Dorsolateral prefrontal cortex (tissue), 120 donors: ENCODE measurements at regions of chr17 and their contacts with region 1.

Region 1: DNA sequence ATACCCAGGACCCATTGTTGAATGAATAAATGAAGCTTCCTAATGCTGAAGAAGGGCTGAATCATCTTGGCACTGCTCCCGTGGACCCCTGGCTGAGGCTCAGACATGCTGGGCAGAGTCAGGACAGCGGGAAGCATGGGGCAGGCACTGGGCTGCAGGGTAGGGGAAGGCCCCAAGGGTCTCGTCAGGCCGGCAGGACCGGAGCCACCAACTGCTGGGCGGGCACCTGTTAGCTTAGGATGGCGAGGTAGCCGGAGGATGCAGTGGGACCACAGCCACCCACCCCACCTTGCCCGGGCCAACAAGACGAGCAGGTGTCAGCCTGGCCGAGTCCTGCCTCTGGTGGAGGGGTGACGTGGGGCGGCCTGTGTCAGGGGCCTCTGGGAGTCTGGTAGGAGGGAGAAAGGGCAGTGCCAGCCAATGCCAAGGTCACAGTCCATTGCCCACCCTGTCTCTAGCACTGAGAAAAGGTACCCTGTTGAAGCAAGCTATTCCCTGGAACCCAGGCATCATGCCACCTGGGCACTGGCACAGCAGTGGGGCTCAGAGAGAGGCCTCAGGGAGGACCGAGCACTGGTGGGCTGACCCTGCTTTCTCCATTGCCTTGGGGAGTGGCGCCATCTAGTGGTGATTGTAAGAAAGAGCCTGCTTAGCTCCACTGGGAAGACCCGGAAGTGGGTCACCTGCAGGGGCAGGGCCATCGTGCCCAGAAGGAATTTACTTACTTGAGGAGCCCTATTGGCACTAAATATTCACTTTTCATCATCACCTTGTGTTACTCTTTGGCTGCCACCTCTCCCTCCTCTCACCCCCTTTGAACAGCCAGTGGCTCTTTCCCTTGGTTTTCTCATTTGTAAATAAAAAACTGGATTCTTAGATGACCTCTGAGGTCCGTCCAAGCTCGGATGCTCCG is 3.0 kb upstream of the DLX3 start:
- DNase-seq: peak in 9 of 10 donors; percentile 56 to 83 (median 63)
- H3K4me3 ChIP-seq: no peak overlapping the region
- H3K27ac ChIP-seq: no peak overlapping the region
- H3K27me3 ChIP-seq: peaks cover 0 to 98% (median 83%) of the 10 kb centered on the region in 45 donors
- CTCF ChIP-seq: peak; percentile 84 to 99 (median 94)

Region 2: DNA sequence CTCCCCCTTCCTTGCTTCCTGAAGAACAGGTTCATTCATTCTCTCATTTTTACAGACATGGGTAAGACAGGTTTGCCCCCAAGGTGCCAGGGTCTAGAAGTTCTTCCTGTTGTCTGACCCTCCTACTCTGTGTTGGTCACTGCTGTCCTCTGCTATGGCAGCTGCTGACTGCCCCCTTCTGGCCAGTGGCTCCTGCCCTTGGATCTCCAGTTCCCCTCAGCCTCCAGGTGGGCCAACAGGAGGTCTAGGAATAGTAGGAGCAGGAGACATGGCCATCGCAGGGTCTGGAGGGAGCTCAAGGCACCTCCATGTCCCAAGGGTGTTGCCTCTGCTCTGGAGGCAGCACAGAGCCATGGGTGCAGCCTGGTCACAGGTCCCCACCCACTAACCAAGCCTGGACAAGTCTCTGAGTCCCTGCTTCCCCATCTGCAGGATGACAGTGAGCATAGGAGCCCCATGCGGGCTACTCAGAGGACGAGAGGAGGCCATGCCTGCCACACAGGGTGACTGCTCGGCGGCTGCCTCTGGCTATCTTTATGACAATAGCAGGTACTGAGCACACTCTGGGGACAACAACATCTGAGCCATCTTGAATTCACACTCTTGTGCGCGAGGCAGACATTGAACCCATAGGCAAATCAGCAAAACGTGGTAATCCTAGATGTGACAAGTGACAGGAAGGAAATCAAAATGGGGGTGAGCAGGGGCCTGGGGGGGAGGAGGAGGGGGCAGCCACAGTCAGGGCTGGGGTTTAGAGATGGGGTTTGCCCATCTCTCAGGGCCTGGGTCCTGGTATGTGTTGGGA is 449.3 kb before region 1 on chr17:
- intact Hi-C with region 1: no loop called
- DNase-seq: no peak
- H3K4me3 ChIP-seq: no peak overlapping the region
- H3K27ac ChIP-seq: no peak overlapping the region
- H3K27me3 ChIP-seq: peaks cover 0 to 15% (median 0%) of the 10 kb centered on the region in 45 donors
- CTCF ChIP-seq: peak in 52 of 56 donors; percentile 15 to 75 (median 47)

Region 3: DNA sequence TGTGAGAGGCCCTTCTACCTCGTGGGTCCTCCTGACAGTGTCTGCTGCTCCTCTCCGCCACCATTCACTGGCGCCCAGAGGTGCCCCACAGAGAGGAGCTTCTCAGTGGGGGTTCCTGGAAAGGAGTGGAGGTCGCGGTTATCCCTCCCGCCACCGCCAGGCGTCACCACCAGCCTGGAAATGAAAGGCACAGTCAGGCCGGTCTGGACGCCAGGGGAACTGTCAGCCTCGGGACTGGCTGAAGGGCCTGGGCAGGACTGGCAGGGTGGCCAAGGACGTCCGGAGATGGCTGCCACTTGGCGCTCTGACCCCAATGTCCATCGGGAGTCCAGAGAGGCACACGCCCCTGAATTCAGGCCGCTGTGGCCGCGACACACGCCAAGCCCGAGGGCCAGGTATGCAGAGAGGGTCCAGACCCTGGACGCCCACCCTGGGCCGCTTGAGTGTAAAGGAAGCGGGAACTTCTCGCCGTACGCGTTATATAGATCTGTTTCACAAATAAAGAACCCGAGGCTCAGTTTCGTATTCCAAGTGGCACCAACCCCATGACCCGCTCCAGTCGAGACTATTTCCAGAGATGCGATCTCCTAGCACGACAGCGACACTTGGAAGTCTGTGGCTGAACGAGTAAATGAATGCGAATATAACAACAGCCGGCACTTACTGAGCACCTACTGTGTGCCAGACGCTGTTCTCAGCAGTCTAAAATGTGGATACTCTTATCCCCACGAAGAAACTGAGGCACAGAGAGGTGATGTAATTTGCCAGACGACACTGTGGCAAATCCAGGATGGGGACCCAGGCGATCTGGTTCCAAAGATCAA is 430.0 kb before region 1 on chr17:
- intact Hi-C with region 1: loop called (anchors 5 to 10 kb)
- DNase-seq: peak; percentile 76 to 91 (median 88)
- H3K4me3 ChIP-seq: peak overlapping the region; percentile 34 to 78 (median 57)
- H3K27ac ChIP-seq: peak overlapping the region in 44 of 59 donors; percentile 5 to 95 (median 68)
- H3K27me3 ChIP-seq: no peaks in the 10 kb centered on the region
- CTCF ChIP-seq: peak; percentile 86 to 99 (median 96)

Region 4: GRCh38 chr17:49575579-49576087 is 422.4 kb before region 1 on chr17 and contains the start of gene NXPH3:
- intact Hi-C with region 1: loop called in 1 of 2 experiments (anchors 5 kb)
- DNase-seq: peak in 3 of 10 donors; percentile 45 to 84 (median 72)
- H3K4me3 ChIP-seq: peak within 1 kb of the TSS; percentile 45 to 84 (median 71)
- H3K27ac ChIP-seq: peak within 1 kb of the TSS in 53 of 59 donors; percentile 14 to 89 (median 70)
- H3K27me3 ChIP-seq: no peaks in the 10 kb centered on the region
- CTCF ChIP-seq: peak in 41 of 56 donors; percentile 7 to 80 (median 42)
- total RNA-seq, gene NXPH3: 8.9 to 36.3 (median 18.6) TPM

Region 5: GRCh38 chr17:49707608-49708514 is 290.2 kb before region 1 on chr17 and contains the start of gene SLC35B1:
- intact Hi-C with region 1: loop called in 1 of 2 experiments (anchors 5 kb)
- DNase-seq: peak; percentile 98 to 100 (median 100)
- H3K4me3 ChIP-seq: peak within 1 kb of the TSS; percentile 76 to 100 (median 97)
- H3K27ac ChIP-seq: peak within 1 kb of the TSS; percentile 87 to 100 (median 98)
- H3K27me3 ChIP-seq: no peaks in the 10 kb centered on the region
- CTCF ChIP-seq: peak; percentile 53 to 91 (median 81)
- total RNA-seq, gene SLC35B1: 30.7 to 59.0 (median 43.7) TPM

Region 6: DNA sequence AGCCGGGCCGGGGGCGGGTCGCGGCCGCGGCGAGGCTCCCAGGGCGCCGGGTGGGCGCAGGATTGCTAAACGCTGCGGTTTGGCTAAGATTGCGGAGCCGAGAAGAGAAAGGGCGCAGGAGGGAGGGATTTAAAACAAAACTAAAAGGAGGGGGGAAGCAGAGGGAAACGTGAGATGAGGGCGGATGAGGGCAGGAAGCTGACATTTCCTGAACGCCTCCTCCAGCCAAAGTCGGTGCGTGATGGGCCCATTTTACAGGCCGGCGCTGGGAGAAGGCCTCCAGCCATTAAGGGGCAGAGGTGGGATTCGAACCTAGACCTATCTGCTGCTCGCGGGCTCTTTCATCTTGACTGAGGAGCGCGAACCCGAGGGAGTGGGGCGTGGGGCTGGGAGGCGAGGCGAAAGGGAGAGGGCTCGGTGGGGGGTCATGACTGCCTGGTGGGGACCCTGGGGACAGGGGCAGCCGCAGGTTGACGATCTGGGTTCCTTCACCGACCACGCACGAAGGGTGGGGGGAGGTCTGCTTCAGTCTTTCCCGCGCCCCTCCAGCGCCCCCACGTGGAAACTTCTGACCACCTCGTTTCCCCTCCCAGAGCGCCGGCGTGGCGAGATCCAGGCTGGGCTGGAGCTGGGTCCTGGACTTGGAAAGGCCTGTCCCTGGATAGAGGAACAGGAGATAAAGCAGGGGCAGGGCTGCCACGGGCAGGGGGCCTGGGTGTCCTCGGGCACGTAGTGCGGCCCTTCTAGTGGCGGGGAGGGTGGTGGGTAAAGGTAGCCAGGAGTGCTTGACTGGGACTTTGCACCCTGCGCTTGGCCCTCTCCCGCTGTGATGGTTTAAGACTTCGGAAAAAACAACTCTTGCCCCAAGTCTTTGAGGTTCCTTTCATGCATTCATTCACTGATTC is 146.4 kb before region 1 on chr17:
- intact Hi-C with region 1: loop called in 1 of 2 experiments (anchors 2 kb)
- DNase-seq: peak in 8 of 10 donors; percentile 25 to 65 (median 58)
- H3K4me3 ChIP-seq: peak overlapping the region; percentile 16 to 73 (median 55)
- H3K27ac ChIP-seq: peak overlapping the region in 2 of 59 donors; percentile 18 to 38
- H3K27me3 ChIP-seq: peaks cover 0 to 10% (median 0%) of the 10 kb centered on the region in 45 donors
- CTCF ChIP-seq: peak in 55 of 56 donors; percentile 25 to 69 (median 56)

Region 7: DNA sequence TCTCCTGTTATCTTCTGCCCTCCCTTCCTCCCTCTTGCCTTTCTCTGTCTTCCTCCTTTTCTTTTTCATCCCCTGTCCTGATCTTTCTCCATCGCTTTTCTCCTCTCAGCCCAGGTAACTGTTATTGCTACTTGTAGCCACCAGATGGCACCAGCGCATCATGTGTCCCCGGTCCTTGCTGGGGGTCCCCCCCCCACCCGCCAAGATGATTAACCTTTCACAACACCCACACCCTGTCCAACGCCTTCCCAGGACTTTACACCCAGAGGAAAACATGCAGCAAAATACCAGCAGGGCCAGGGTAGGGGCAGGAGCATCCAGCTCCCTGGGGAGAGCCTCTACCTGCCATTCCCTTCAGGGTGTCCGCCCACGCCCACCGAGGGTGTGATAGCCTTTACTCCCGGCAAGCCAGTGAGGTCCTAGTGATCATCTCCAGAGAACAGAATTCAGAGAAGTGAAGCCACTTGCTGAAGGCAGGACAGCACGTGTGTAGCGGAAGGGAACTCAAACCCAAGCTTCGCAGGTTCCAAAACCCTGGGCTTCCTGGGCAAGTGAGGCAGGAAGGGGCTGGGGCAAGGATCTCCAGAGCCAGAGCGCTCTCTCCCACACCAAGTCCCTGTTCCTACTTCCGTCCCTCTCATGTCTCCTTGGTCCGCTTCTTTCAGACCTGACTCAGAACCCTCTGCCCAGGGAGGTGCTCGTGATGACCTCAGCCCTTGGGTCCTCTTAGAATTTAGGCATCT is 136.7 kb before region 1 on chr17:
- intact Hi-C with region 1: loop called (anchors 1 to 2 kb)
- DNase-seq: peak in 7 of 10 donors; percentile 20 to 67 (median 48)
- H3K4me3 ChIP-seq: no peak overlapping the region
- H3K27ac ChIP-seq: no peak overlapping the region
- H3K27me3 ChIP-seq: no peaks in the 10 kb centered on the region
- CTCF ChIP-seq: peak; percentile 48 to 92 (median 83)

Region 8: DNA sequence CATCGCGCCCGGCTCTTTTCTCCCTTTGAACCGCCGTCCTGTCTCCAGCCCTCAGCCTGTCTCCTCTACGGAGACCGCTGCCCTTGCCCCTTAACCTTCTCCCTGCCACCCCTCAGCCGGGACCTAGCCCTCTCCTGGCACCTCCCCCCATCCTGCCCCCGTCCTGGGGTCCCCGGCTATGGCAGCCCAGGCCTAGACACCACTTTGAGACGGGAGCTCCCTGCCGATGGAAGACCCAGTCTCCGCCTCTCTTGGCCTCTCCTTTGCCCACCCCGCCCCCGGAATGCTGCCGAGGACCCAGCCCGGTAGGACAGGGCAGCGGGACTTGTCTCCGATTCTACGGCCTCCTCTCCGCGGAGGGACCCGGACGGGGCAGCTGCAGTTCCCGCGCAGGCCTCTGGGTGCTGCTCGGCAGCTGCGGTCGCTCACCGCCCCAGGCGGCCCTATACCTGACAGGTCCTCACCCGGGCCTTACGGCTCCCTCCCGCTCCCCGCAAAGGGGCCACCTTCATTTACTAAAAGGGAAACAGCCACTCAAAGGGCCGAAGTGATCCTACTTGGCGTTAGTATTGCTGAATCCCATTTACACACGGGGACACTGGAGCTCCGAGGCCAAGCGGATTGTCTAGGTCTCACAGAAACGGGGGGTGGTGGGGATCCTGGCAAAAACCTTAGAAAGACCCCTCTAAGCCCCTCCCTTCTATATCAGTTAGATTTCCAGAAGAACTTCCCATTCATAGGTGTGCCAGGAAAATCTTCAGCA is 117.6 kb before region 1 on chr17:
- intact Hi-C with region 1: loop called in 1 of 2 experiments (anchors 2 kb)
- DNase-seq: peak in 9 of 10 donors; percentile 21 to 75 (median 56)
- H3K4me3 ChIP-seq: peak overlapping the region in 24 of 59 donors; percentile 3 to 41 (median 23)
- H3K27ac ChIP-seq: no peak overlapping the region
- H3K27me3 ChIP-seq: peaks cover 0 to 23% (median 4%) of the 10 kb centered on the region in 45 donors
- CTCF ChIP-seq: peak; percentile 33 to 97 (median 87)